Activated CD4-positive, alpha-beta T cell treated with anti-CD3 and anti-CD28 coated beads for 36 hours (primary cell): ENCODE measurements at regions of chr1 and their contacts with region 1.

Region 1: GRCh38 chr1:109643385-109644230 is 12.3 kb upstream of the GSTM4 start:
- DNase-seq: peak; percentile 95
- ATAC-seq: peak; percentile 98
- H3K4me3 Mint-ChIP-seq: no peak overlapping the region
- H3K27ac Mint-ChIP-seq: no peak overlapping the region
- H3K4me1 Mint-ChIP-seq: peaks cover 10% of the 10 kb centered on the region
- H3K27me3 Mint-ChIP-seq: no peaks in the 10 kb centered on the region

Region 2: GRCh38 chr1:109099938-109100773 is 543.5 kb before region 1 on chr1:
- CTCF ChIA-PET with region 1: no interaction called
- POLR2A ChIA-PET with region 1: interaction called, 13 read pairs
- intact Hi-C with region 1: no loop called
- DNase-seq: peak; percentile 98
- ATAC-seq: peak; percentile 94
- H3K4me3 Mint-ChIP-seq: peak overlapping the region; percentile 98
- H3K27ac Mint-ChIP-seq: peak overlapping the region; percentile 98
- H3K4me1 Mint-ChIP-seq: peaks cover 6% of the 10 kb centered on the region
- H3K27me3 Mint-ChIP-seq: no peaks in the 10 kb centered on the region

Region 3: GRCh38 chr1:109370712-109371455 is 272.7 kb before region 1 on chr1:
- CTCF ChIA-PET with region 1: no interaction called
- POLR2A ChIA-PET with region 1: no interaction called
- intact Hi-C with region 1: no loop called
- DNase-seq: no peak
- ATAC-seq: peak; percentile 24
- H3K4me3 Mint-ChIP-seq: no peak overlapping the region
- H3K27ac Mint-ChIP-seq: peak overlapping the region; percentile 1
- H3K4me1 Mint-ChIP-seq: peaks cover 20% of the 10 kb centered on the region
- H3K27me3 Mint-ChIP-seq: peaks cover 15% of the 10 kb centered on the region

Region 4: DNA sequence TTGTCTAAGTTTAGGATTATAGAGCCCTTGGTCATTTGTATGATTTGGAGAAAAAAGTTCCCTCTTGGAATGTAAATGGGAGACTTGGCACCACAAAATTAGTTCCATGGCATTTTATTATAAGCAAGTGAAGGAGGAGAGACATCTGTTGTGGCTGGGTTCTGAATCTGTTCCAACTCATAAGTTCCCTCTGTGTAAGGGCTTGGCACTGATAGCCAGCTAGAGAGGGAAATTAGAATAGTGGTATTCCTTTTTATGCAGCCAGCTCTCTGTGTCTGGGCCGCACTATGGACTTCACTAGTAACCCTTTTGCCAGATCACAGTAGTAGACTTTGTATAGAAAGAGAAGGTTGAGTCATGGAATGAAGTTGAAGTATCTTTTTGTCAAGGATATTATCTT is 64.1 kb before region 1 on chr1:
- CTCF ChIA-PET with region 1: no interaction called
- POLR2A ChIA-PET with region 1: no interaction called
- intact Hi-C with region 1: no loop called
- DNase-seq: no peak
- ATAC-seq: no peak
- H3K4me3 Mint-ChIP-seq: no peak overlapping the region
- H3K27ac Mint-ChIP-seq: no peak overlapping the region
- H3K4me1 Mint-ChIP-seq: peaks cover 3% of the 10 kb centered on the region
- H3K27me3 Mint-ChIP-seq: no peaks in the 10 kb centered on the region

Region 5: GRCh38 chr1:109630081-109630897 is 13.3 kb before region 1 on chr1:
- CTCF ChIA-PET with region 1: interaction called, 37 read pairs
- POLR2A ChIA-PET with region 1: no interaction called
- intact Hi-C with region 1: no loop called
- DNase-seq: peak; percentile 66
- ATAC-seq: no peak
- H3K4me3 Mint-ChIP-seq: no peak overlapping the region
- H3K27ac Mint-ChIP-seq: no peak overlapping the region
- H3K4me1 Mint-ChIP-seq: peaks cover 14% of the 10 kb centered on the region
- H3K27me3 Mint-ChIP-seq: no peaks in the 10 kb centered on the region

Region 6: GRCh38 chr1:109687616-109688499 is 44.2 kb after region 1 on chr1 and contains the start of gene GSTM1:
- CTCF ChIA-PET with region 1: interaction called, 30 read pairs
- POLR2A ChIA-PET with region 1: interaction called, 10 read pairs
- intact Hi-C with region 1: loop called (anchors 2 kb)
- DNase-seq: peak; percentile 94
- ATAC-seq: peak; percentile 99
- H3K4me3 Mint-ChIP-seq: peak within 1 kb of the TSS; percentile 88
- H3K27ac Mint-ChIP-seq: peak within 1 kb of the TSS; percentile 96
- H3K4me1 Mint-ChIP-seq: peaks cover 20% of the 10 kb centered on the region
- H3K27me3 Mint-ChIP-seq: no peaks in the 10 kb centered on the region
- total RNA-seq, gene GSTM1: 94.0 to 116 TPM

Region 7: GRCh38 chr1:109751531-109752260 is 108.1 kb after region 1 on chr1:
- CTCF ChIA-PET with region 1: interaction called, 17 read pairs
- POLR2A ChIA-PET with region 1: no interaction called
- intact Hi-C with region 1: no loop called
- DNase-seq: no peak
- ATAC-seq: no peak
- H3K4me3 Mint-ChIP-seq: no peak overlapping the region
- H3K27ac Mint-ChIP-seq: no peak overlapping the region
- H3K4me1 Mint-ChIP-seq: no peaks in the 10 kb centered on the region
- H3K27me3 Mint-ChIP-seq: peaks cover 16% of the 10 kb centered on the region

Region 8: GRCh38 chr1:109773146-109773899 is 129.7 kb after region 1 on chr1:
- CTCF ChIA-PET with region 1: interaction called, 165 read pairs
- POLR2A ChIA-PET with region 1: no interaction called
- intact Hi-C with region 1: loop called (anchors 1 to 2 kb)
- DNase-seq: peak; percentile 85
- ATAC-seq: peak; percentile 88
- H3K4me3 Mint-ChIP-seq: no peak overlapping the region
- H3K27ac Mint-ChIP-seq: no peak overlapping the region
- H3K4me1 Mint-ChIP-seq: no peaks in the 10 kb centered on the region
- H3K27me3 Mint-ChIP-seq: no peaks in the 10 kb centered on the region

Region 9: DNA sequence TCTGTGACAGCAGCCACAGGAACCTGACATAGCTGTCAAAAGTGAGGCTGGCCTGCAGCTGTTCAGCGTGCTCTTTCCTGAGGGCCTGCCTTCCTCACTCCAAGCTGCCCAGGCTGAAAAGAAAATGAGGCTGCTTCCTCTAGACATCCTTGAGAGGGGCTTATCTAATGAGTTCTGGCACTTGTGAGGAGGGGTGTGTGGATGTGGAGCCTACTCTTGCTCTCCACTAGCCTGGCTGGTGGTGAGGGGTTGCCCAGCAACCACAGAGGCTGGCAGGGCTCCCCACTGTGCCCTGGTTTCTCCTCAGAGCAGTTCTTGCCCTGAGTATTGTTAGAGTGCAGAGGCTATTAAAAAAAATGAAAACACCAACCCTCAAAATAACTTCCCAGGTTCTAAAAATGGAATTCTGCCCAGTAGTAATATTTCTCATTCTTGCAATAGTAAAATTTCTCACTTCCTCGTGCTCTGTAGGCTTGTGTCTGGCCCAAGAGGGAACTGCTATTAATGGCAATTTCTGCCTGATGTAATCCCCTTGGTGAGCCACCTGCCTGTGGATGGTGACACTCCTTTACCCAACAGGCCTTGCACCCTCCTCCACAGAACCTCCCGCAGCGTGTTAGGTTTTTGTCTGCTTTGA is 172.7 kb after region 1 on chr1:
- CTCF ChIA-PET with region 1: no interaction called
- POLR2A ChIA-PET with region 1: no interaction called
- intact Hi-C with region 1: no loop called
- DNase-seq: no peak
- ATAC-seq: no peak
- H3K4me3 Mint-ChIP-seq: no peak overlapping the region
- H3K27ac Mint-ChIP-seq: no peak overlapping the region
- H3K4me1 Mint-ChIP-seq: peaks cover 5% of the 10 kb centered on the region
- H3K27me3 Mint-ChIP-seq: no peaks in the 10 kb centered on the region